Endothelial cell of umbilical vein (primary cell): ENCODE measurements at regions of chr3 and their contacts with region 1.

Region 1: GRCh38 chr3:72996473-72997333 is at the start of gene PPP4R2:
- DNase-seq: peak; percentile 87
- H3K4me3 ChIP-seq: peak within 1 kb of the TSS; percentile 69 to 97 (median 74)
- H3K27ac ChIP-seq: peak within 1 kb of the TSS; percentile 70
- H3K4me1 ChIP-seq: peaks cover 27% of the 10 kb centered on the region
- H3K27me3 ChIP-seq: no peaks in the 10 kb centered on the region
- CTCF ChIP-seq: no peak
- POLR2A ChIP-seq: peak; percentile 92
- total RNA-seq, gene PPP4R2: 74.4 and 75.4 TPM in 2 replicates

Region 2: DNA sequence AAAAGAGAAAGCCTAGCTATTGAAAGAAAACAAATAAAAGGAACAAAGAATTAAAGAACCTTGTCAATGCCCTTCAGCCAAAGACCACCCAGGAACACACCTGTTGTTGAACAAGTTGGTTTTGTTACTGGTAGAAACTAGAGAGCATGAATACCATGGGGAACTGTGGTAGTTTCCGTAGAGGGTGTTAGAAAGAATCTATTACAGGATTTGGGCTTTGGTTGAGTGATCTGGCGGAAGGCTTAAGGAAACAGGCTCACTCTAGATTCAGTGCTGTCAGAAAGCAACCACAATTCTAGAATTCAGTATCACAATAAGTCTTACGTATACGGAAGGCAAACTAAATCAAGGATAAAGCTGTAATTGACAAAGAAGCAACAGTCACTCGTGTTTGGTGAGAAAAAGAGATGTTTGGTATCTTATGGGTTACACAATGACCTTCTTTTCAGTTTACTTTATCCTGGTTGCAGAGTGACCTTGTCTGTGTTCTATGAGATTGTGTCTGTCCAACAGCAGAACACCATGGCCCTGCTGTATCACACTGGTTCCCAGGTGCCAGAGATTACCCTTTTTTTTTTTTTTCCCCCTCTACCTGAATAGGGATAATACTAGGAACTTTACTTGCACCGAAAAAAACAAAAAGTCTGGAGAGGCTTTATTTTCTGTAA is 414.4 kb before region 1 on chr3:
- CTCF ChIA-PET with region 1: no interaction called
- POLR2A ChIA-PET with region 1: no interaction called
- dilution Hi-C with region 1: no loop called
- intact Hi-C with region 1: no loop called
- DNase-seq: no peak
- H3K4me3 ChIP-seq: no peak overlapping the region
- H3K27ac ChIP-seq: no peak overlapping the region
- H3K4me1 ChIP-seq: no peaks in the 10 kb centered on the region
- H3K27me3 ChIP-seq: peaks cover 0 to 2% of the 10 kb centered on the region in 2 experiments
- CTCF ChIP-seq: no peak
- POLR2A ChIP-seq: no peak

Region 3: DNA sequence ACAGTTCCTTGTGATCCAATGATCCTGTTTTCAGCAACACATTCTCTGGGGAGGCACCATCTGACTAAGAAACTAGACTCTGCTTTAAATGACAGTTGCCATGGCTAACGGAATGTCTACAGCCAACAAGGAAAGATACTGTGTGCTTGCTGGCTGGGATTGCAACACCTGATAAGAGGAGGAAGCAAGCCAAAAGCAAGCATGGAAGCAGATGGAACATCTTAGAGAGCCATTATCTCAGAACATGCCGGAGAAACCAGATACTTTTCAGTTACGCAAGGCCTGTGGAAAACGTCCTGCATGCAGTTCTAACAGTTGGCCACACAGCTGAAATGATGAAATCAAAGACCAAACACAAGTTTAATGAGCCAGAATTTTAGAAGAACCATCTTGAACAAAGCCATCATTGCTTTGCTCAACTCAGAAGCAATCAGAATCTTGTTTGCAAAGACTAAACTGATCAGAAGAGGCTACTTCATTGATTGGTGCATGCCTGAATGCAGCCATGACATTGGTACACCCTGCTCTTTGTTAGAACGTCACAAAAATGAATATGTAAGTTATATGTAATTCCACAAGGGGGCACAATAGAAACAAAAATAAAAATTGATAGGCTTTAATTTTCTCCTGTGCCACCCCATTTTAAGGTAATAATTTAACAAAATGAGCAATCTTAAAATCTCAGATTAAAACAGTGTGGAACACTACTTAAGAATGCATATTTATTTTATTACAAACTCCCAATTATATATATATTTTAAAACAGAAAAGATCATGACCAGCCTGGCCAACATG is 58.0 kb before region 1 on chr3:
- CTCF ChIA-PET with region 1: interaction called, 5 read pairs
- POLR2A ChIA-PET with region 1: no interaction called
- dilution Hi-C with region 1: no loop called
- intact Hi-C with region 1: loop called (anchors 1 kb)
- DNase-seq: peak; percentile 68
- H3K4me3 ChIP-seq: no peak overlapping the region
- H3K27ac ChIP-seq: no peak overlapping the region
- H3K4me1 ChIP-seq: no peaks in the 10 kb centered on the region
- H3K27me3 ChIP-seq: peaks cover 0 to 4% of the 10 kb centered on the region in 2 experiments
- CTCF ChIP-seq: peak in 1 of 2 donors; percentile 33
- POLR2A ChIP-seq: no peak

Region 4: DNA sequence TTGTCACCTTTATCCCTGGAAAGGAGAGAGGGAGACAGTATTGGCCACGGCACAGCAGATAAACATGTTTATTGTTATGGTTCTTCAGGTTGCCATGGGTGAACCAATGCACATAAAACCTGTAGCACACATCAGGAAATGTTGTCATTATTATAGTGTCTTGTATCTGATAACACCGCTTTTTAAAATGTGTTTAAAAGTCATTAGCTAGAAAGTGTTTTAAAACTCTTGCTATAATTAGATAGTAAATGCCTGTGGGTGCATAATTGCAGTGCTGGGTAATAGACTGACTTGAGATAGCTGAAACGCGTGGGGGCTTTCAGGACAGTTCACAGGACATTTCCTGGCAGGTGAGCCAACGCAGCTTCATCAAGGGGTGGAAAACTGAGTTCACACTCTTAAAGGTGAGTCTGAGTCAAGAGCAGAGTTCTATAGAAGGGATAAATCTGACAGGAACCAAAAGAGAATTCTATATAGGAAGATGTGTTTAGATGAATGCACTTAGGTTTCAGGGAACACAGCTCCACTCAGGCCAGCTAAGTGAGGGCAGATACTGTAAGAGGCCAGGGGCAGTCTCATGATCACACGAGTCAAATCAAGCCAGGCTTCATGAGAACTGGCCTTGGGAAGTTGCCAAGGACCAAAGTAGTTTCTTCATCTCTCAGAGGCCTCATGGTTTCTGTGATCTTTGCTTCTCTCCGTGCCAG is 35.7 kb before region 1 on chr3:
- CTCF ChIA-PET with region 1: no interaction called
- POLR2A ChIA-PET with region 1: no interaction called
- dilution Hi-C with region 1: no loop called
- intact Hi-C with region 1: no loop called
- DNase-seq: no peak
- H3K4me3 ChIP-seq: no peak overlapping the region
- H3K27ac ChIP-seq: no peak overlapping the region
- H3K4me1 ChIP-seq: no peaks in the 10 kb centered on the region
- H3K27me3 ChIP-seq: peaks cover 0 to 2% of the 10 kb centered on the region in 2 experiments
- CTCF ChIP-seq: no peak
- POLR2A ChIP-seq: no peak

Region 5: DNA sequence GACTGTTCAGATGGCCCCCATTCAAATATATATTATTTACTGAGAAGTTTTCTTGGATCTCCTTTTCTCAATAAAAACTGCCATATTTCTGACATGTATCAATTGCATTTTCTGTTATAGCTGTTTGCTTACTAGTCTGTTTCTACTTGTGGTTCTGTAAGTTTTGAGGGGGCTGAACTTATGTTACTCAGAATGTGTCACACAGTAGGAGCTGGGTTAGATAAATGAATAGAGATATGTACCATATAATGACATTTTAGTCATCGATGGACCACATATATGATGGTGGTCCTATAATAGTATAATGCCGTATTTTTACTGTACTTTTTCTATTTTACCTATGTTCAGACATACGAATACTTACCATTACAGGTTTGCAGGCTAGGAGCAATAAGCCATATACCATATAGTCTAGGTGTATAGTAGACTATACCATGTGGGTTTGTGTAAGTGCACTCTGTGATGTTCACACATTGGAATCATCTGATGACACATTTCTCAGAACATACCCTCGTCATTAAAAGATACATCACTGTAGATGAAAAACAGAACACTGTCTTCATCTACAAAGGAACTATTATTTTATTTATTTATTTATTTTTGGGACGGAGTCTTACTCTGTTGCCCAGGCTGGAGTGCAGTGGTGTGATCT is 22.2 kb after region 1 on chr3:
- CTCF ChIA-PET with region 1: interaction called, 9 read pairs
- POLR2A ChIA-PET with region 1: interaction called, 4 read pairs
- dilution Hi-C with region 1: no loop called
- intact Hi-C with region 1: loop called (anchors 2 kb)
- DNase-seq: no peak
- H3K4me3 ChIP-seq: no peak overlapping the region
- H3K27ac ChIP-seq: no peak overlapping the region
- H3K4me1 ChIP-seq: no peaks in the 10 kb centered on the region
- H3K27me3 ChIP-seq: no peaks in the 10 kb centered on the region
- CTCF ChIP-seq: no peak
- POLR2A ChIP-seq: no peak

Region 6: GRCh38 chr3:73056014-73056844 is 59.5 kb after region 1 on chr3:
- CTCF ChIA-PET with region 1: interaction called, 69 read pairs
- POLR2A ChIA-PET with region 1: no interaction called
- dilution Hi-C with region 1: no loop called
- intact Hi-C with region 1: loop called (anchors 2 kb)
- DNase-seq: peak; percentile 46
- H3K4me3 ChIP-seq: no peak overlapping the region
- H3K27ac ChIP-seq: no peak overlapping the region
- H3K4me1 ChIP-seq: peaks cover 4% of the 10 kb centered on the region
- H3K27me3 ChIP-seq: no peaks in the 10 kb centered on the region
- CTCF ChIP-seq: peak in 1 of 2 donors; percentile 4
- POLR2A ChIP-seq: no peak